ENCODE measurements at regions of chr5 and their contacts with region 1.

Region 1: DNA sequence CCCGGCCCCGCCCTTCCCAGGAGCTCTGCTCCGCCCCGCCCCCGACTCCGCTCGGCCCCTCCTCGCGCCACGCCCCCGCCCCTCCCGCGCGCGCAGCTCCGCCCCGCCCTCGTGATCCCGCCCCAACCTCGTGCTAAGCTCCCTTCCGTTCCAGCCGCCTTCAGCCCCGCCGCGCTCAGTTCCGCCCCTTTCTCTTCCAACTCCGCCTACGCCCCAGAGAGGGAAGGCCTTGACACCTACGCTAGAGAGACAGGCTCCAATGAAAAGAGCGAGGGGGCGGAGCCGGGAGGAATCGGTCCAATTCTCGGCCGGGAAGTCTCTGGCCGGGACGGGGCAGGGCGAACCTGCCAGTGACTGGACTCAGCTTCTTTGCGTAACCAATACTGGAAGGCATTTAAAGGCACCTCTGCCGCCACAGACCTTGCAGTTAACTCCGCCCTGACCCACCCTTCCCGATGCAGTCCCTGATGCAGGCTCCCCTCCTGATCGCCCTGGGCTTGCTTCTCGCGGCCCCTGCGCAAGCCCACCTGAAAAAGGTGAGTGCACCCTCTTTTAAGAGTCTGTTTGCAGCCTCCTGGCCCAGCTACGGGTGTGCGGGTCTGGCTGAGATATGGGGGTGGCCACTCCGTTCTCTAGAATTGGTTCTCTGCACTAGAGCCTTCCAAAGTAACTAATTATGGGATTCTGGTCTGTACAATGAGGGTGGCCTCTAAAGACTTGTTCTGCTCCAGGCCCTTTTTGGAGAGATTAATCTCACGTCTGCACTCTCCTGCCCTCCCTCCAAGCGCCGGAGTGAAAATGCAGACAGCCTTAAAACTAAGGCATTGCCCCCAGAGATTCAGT is at the start of gene GM2A:
- H3K4me3 Mint-ChIP-seq: peak within 1 kb of the TSS; percentile 98
- H3K27ac Mint-ChIP-seq: peak within 1 kb of the TSS; percentile 93
- H3K4me1 Mint-ChIP-seq: peaks cover 50% of the 10 kb centered on the region
- H3K27me3 Mint-ChIP-seq: no peaks in the 10 kb centered on the region

Region 2: DNA sequence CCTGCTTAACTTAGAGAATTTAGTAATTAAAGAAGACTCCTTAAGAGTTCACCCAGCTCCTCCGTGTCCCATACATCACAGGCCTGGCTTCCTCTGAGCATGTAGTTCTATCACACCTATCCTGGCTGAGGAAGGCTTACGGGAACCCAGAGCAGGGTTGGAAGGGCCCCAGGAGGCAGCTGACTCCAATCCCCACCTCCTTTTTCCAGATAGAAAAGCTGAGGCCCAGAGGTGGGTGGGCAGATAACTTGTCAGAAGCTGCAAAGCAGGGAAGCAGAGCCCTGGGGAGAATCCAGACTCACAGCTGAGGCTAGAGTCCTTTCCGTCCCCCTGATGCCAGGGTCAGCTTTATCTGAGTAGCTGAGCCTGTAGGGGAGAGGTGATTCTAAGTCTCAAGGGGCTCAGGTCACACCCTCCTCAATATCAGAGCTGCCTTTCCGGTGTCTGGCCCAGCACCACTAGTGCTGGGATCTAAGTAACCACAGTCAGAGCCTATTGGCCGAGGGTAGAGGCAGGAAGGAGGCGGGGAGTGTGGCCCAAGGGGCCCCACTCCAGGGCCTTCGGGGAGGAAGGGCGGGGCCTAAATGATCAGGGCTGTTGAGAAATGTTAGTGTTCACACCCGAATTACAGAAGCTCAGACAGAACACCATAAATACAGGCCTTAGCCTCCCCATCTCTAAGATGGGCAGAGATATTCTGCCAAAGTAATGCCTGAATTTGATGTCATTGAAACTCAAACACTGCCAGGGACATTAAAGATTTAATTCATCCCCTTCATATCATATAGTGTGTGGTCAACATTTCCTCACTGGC is 39.0 kb before region 1 on chr5:
- intact Hi-C with region 1: loop called (anchors 2 kb)
- H3K4me3 Mint-ChIP-seq: peak overlapping the region; percentile 45
- H3K27ac Mint-ChIP-seq: peak overlapping the region; percentile 93
- H3K4me1 Mint-ChIP-seq: peaks cover 77% of the 10 kb centered on the region
- H3K27me3 Mint-ChIP-seq: no peaks in the 10 kb centered on the region

Region 3: GRCh38 chr5:151270599-151270998 is 17.6 kb after region 1 on chr5:
- intact Hi-C with region 1: loop called (anchors 2 kb)
- H3K4me3 Mint-ChIP-seq: no peak overlapping the region
- H3K27ac Mint-ChIP-seq: no peak overlapping the region
- H3K4me1 Mint-ChIP-seq: no peaks in the 10 kb centered on the region
- H3K27me3 Mint-ChIP-seq: peaks cover 4% of the 10 kb centered on the region

Region 4: GRCh38 chr5:151758430-151759241 is 505.7 kb after region 1 on chr5 and contains the start of gene ATOX1:
- intact Hi-C with region 1: loop called (anchors 10 kb)
- H3K4me3 Mint-ChIP-seq: peak within 1 kb of the TSS; percentile 87
- H3K27ac Mint-ChIP-seq: peak within 1 kb of the TSS; percentile 83
- H3K4me1 Mint-ChIP-seq: peaks cover 34% of the 10 kb centered on the region
- H3K27me3 Mint-ChIP-seq: no peaks in the 10 kb centered on the region